Activated CD4-positive, alpha-beta memory T cell treated with anti-CD3 and anti-CD28 coated beads, Interleukin-2, amount 10 ng/mL, durations not matched to agents 7 days and 5 days (primary cell): ENCODE measurements at regions of chr16 and their contacts with region 1.

Region 1: GRCh38 chr16:69443927-69444631 is 19.7 kb downstream of the CYB5B start:
- DNase-seq: peak; percentile 44
- H3K4me3 Mint-ChIP-seq: peak overlapping the region; percentile 73
- H3K27ac Mint-ChIP-seq: peak overlapping the region; percentile 86
- H3K4me1 Mint-ChIP-seq: peaks cover 35% of the 10 kb centered on the region
- H3K27me3 Mint-ChIP-seq: no peaks in the 10 kb centered on the region

Region 2: DNA sequence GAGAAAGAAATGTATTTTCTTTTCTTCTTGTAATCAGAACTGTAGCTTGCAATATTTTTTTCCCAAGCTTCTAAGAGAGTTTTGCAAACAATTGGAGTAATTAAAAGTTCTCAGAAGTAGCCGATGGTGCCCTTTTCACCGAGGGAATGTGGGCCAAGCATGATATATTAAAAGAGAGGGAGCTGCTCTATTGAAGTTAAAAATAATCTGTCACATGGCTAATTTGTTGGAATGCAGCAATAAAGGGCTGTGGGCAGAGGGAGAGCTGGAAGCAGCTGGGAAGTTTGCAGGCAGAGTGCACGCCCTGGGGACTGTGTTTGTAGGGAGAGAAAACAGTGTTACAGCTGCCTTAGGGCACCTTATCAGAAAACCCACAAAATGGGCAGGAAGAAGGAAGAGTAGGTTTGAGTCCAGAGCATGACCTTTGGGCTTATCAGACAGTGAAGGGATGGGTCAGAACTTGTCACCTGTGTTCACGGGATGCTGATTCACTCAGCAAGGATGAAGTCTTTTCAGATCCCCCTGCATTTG is 39.7 kb before region 1 on chr16:
- CTCF ChIA-PET with region 1: no interaction called
- POLR2A ChIA-PET with region 1: no interaction called
- DNase-seq: no peak
- H3K4me3 Mint-ChIP-seq: no peak overlapping the region
- H3K27ac Mint-ChIP-seq: no peak overlapping the region
- H3K4me1 Mint-ChIP-seq: peaks cover 5% of the 10 kb centered on the region
- H3K27me3 Mint-ChIP-seq: peaks cover 7% of the 10 kb centered on the region

Region 3: DNA sequence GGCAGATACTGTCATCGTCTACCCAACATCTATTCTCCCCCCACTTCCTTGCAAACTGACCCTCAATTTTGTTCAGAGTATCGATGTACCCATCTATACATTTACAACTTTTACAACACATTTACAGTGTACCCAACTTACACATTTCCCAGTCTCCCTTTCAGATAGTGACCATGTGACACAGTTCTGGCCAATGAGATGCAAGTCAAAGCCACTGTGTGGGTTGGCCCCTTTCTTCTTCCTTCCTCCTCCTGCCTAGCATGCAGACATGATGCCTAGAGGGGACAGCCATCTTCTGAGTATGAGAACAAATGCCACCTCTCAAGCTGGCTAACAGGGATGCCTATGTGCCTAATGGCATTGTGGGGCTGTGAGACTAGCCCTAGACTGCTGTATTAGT is 110.4 kb after region 1 on chr16:
- CTCF ChIA-PET with region 1: no interaction called
- POLR2A ChIA-PET with region 1: no interaction called
- DNase-seq: no peak
- H3K4me3 Mint-ChIP-seq: no peak overlapping the region
- H3K27ac Mint-ChIP-seq: no peak overlapping the region
- H3K4me1 Mint-ChIP-seq: peaks cover 19% of the 10 kb centered on the region
- H3K27me3 Mint-ChIP-seq: no peaks in the 10 kb centered on the region

Region 4: GRCh38 chr16:69565671-69566239 is 121.7 kb after region 1 on chr16 and contains the start of gene NFAT5:
- CTCF ChIA-PET with region 1: interaction called, 3 read pairs
- POLR2A ChIA-PET with region 1: interaction called, 13 read pairs
- DNase-seq: peak; percentile 91
- H3K4me3 Mint-ChIP-seq: peak within 1 kb of the TSS; percentile 97
- H3K27ac Mint-ChIP-seq: peak within 1 kb of the TSS; percentile 94
- H3K4me1 Mint-ChIP-seq: peaks cover 47% of the 10 kb centered on the region
- H3K27me3 Mint-ChIP-seq: no peaks in the 10 kb centered on the region
- total RNA-seq, gene NFAT5: 19.7 to 21.3 TPM